Activated naive CD4-positive, alpha-beta T cell treated with anti-CD3 and anti-CD28 coated beads for 36 hours (primary cell): ENCODE measurements at regions of chr6 and their contacts with region 1.

Region 1: GRCh38 chr6:41846666-41847237 is 48.4 kb downstream of the USP49 start:
- DNase-seq: peak; percentile 81
- H3K4me3 Mint-ChIP-seq: no peak overlapping the region
- H3K27ac Mint-ChIP-seq: no peak overlapping the region
- H3K4me1 Mint-ChIP-seq: peaks cover 5% of the 10 kb centered on the region
- H3K27me3 Mint-ChIP-seq: no peaks in the 10 kb centered on the region

Region 2: DNA sequence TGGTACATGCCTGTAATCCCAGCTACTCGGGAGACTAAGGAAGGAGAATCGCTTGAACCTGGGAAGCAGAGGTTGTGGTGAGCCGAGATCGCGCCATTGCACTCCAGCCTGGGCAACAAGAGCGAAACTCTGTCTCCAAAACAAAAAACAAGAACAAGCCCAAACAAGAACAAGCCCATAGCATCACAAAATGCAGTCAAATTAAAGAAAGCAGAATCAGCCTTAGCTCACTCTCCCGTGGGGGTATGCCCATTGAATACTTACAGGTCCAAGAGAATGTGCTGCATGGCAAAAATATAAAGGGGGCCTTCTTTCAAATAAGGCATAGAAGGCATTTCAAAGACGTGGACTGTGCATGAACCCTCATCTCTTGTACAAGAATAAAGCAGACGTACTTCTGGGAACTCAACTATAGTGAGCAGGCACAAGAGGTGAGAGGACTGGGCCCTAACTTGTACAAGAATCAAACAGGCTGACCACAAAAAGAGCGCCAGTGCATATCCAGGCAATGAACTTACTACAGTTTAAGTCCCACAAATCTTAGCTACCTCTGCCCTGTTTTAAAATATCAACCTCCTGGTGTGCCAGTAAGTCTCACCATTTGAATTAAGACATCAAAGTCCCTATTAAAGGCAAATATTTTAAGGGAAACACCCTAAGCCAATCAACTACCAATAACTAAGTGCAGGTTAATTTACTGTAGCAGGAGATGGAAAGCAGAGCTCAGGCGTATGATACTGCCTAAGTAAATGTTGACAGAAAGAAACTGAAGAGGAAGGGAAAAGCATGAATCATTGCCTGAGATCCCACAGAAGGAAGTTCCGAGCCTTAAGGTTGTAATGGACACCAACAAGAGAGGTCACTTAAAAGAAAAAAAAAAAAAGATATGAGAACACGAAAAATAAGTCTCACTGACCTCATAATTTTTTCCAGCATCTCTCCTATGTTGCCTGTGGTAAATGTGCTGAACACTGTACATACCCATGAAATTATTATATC is 21.9 kb before region 1 on chr6:
- CTCF ChIA-PET with region 1: no interaction called
- intact Hi-C with region 1: no loop called
- DNase-seq: no peak
- H3K4me3 Mint-ChIP-seq: no peak overlapping the region
- H3K27ac Mint-ChIP-seq: no peak overlapping the region
- H3K4me1 Mint-ChIP-seq: no peaks in the 10 kb centered on the region
- H3K27me3 Mint-ChIP-seq: no peaks in the 10 kb centered on the region

Region 3: GRCh38 chr6:41895300-41896233 is 48.8 kb after region 1 on chr6 and contains the start of gene USP49:
- CTCF ChIA-PET with region 1: interaction called, 4 read pairs
- intact Hi-C with region 1: loop called (anchors 2 kb)
- DNase-seq: peak; percentile 93
- H3K4me3 Mint-ChIP-seq: no peak within 1 kb of the TSS
- H3K27ac Mint-ChIP-seq: peak within 1 kb of the TSS; percentile 91
- H3K4me1 Mint-ChIP-seq: peaks cover 11% of the 10 kb centered on the region
- H3K27me3 Mint-ChIP-seq: no peaks in the 10 kb centered on the region
- total RNA-seq, gene USP49: 8.3 to 8.4 TPM